ENCODE measurements at regions of chr12 and their contacts with region 1.

Region 1: DNA sequence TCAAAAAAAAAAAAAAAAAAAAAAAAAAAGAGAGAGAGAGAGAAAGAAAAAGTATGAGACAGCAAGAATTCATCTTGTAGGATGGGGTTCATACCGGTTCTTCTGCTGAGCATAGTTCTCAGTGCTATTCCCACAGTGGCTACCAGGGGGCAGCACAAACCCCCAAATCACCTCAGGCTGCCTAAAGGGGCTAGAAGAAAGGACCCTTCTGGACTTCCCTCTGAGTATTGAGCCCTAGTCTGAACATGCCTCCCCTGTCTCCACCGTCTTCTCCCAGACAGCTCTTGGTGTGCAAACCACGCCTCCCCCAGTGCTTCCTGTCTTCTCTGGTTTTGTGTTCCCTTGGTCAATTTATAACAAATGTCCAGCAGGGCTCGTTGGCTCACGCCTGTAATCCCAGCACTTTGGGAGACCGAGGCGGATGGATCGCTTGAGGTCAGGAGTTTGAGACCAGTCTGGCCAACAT is 31.3 kb upstream of the SMUG1 start:
- DNase-seq: peak; percentile 52
- H3K4me3 Mint-ChIP-seq: no peak overlapping the region
- H3K27ac Mint-ChIP-seq: no peak overlapping the region
- H3K4me1 Mint-ChIP-seq: peaks cover 16% of the 10 kb centered on the region
- H3K27me3 Mint-ChIP-seq: peaks cover 2% of the 10 kb centered on the region

Region 2: DNA sequence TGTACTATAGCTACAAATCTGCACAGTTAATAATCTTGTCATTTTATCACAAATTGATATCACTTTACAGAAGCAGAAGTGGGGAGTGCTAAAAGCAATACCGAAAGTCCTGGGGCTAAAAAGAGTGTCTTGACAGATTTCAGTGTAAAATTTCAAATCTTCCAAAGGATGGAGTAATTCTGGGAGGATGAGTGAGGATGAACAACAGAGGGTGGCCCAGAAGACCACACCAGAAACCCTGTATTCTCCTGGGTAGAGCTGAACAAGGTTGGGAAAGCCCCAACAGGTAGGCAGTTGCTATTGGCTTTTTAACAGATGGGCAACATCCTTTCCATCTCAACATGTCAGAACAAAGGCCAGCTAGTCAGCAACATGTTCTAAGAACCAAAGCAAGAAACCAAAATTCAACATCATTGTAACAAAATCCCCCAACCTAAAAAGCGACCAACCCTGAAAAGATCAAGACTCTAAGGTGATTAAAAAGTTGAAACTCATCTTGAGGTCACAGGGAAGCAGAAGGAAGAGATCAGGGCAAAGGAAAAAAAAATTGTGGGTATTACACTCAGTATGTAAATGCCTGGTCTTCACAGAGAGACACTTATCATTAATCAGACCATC is 21.0 kb after region 1 on chr12:
- intact Hi-C with region 1: loop called (anchors 2 kb)
- DNase-seq: no peak
- H3K4me3 Mint-ChIP-seq: peak overlapping the region; percentile 19
- H3K27ac Mint-ChIP-seq: peak overlapping the region; percentile 88
- H3K4me1 Mint-ChIP-seq: peaks cover 34% of the 10 kb centered on the region
- H3K27me3 Mint-ChIP-seq: no peaks in the 10 kb centered on the region